ENCODE measurements at regions of chr12 and their contacts with region 1.

Region 1: GRCh38 chr12:42023733-42024494 is 120.8 kb downstream of the GXYLT1 start:
- DNase-seq: peak; percentile 73 to 87
- ATAC-seq: peak; percentile 90 to 96 (median 93)
- H3K4me3 ChIP-seq: peak overlapping the region; percentile 53
- H3K27ac ChIP-seq: no peak overlapping the region
- H3K4me1 ChIP-seq: no peaks in the 10 kb centered on the region
- H3K27me3 ChIP-seq: no peaks in the 10 kb centered on the region
- CTCF ChIP-seq: peak; percentile 96

Region 2: GRCh38 chr12:40946612-40947194 is 1077.2 kb before region 1 on chr12:
- intact Hi-C with region 1: loop called (anchors 5 to 10 kb)
- DNase-seq: no peak
- ATAC-seq: no peak
- H3K4me3 ChIP-seq: no peak overlapping the region
- H3K27ac ChIP-seq: no peak overlapping the region
- H3K4me1 ChIP-seq: no peaks in the 10 kb centered on the region
- H3K27me3 ChIP-seq: no peaks in the 10 kb centered on the region
- CTCF ChIP-seq: peak; percentile 67

Region 3: DNA sequence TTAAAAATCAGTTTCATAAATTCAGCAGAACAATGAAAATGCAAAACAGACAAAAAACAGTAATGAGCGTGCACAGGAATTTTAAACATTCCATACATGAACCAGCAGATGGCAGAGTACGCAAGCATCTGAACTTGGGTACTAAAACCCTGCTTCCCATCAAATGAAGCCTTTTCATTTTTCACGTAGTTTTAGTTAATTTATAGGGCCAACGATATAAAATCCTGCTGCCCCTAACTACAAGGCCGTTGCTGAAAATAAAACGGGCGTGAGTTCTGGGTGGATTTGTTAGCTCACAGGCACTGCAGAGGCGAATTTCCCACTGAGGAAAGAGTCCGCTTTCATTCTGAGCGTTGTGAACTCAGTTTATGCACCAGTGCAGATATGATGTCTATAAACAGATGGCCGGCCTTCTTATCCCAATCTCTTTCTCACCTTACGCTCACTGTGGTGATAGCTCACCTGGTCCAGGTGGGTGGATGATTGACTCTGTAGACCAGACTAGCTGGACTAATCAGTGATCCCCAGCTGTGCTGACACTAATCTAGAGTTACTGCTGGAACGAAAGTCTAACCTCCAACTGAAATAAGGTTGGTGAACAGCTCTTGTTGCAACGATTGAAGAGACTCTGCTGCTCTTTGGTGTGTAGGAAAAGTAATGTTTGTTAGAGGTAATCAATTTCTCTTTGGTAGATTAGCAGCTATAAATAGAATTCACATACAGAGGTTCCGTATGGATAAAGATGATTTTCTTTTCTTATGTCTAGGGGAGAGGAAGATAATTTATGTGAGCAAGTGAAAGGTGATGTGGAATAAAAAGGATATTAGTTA is 746.6 kb before region 1 on chr12:
- intact Hi-C with region 1: loop called (anchors 2 to 5 kb)
- DNase-seq: no peak
- ATAC-seq: no peak
- H3K4me3 ChIP-seq: no peak overlapping the region
- H3K27ac ChIP-seq: no peak overlapping the region
- H3K4me1 ChIP-seq: no peaks in the 10 kb centered on the region
- H3K27me3 ChIP-seq: no peaks in the 10 kb centered on the region
- CTCF ChIP-seq: peak; percentile 55

Region 4: DNA sequence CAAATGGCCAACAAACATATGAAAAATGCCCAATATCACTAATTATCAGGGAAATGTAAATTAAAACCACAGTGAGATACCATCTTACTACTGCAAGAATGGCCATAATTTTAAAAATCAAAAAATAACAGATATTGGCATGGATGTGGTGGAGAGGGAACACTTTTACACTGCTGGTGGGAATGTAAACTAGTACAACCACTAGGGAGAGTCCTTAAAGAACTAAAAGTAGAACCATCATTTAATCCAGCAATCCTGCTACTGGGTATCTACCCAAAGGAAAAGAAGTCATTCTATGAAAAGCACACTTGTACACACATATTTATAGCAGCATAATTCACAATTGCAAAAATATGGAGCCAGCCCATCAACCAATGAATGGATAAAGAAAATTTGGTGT is 338.9 kb before region 1 on chr12:
- intact Hi-C with region 1: loop called in 1 of 2 experiments (anchors 10 kb)
- DNase-seq: no peak
- ATAC-seq: no peak
- H3K4me3 ChIP-seq: no peak overlapping the region
- H3K27ac ChIP-seq: no peak overlapping the region
- H3K4me1 ChIP-seq: no peaks in the 10 kb centered on the region
- H3K27me3 ChIP-seq: no peaks in the 10 kb centered on the region
- CTCF ChIP-seq: no peak

Region 5: GRCh38 chr12:42076976-42077375 is 53.1 kb after region 1 on chr12:
- intact Hi-C with region 1: no loop called
- DNase-seq: no peak
- ATAC-seq: no peak
- H3K4me3 ChIP-seq: no peak overlapping the region
- H3K27ac ChIP-seq: no peak overlapping the region
- H3K4me1 ChIP-seq: no peaks in the 10 kb centered on the region
- H3K27me3 ChIP-seq: no peaks in the 10 kb centered on the region
- CTCF ChIP-seq: no peak